MCF 10A (cell line): ENCODE measurements at regions of chr4 and their contacts with region 1.

Region 1: GRCh38 chr4:53377319-53378170 is at the start of gene FIP1L1:
- DNase-seq: peak; percentile 94
- H3K4me3 Mint-ChIP-seq: peak within 1 kb of the TSS; percentile 86
- H3K27ac Mint-ChIP-seq: peak within 1 kb of the TSS; percentile 94
- H3K4me1 Mint-ChIP-seq: peaks cover 17% of the 10 kb centered on the region
- H3K27me3 Mint-ChIP-seq: no peaks in the 10 kb centered on the region
- CTCF ChIP-seq: no peak
- total RNA-seq, gene FIP1L1: 93.3 and 103 TPM in 2 replicates

Region 2: GRCh38 chr4:53313510-53313909 is 64.0 kb before region 1 on chr4:
- CTCF ChIA-PET with region 1: no interaction called
- POLR2A ChIA-PET with region 1: no interaction called
- intact Hi-C with region 1: no loop called
- DNase-seq: peak; percentile 43
- H3K4me3 Mint-ChIP-seq: no peak overlapping the region
- H3K27ac Mint-ChIP-seq: no peak overlapping the region
- H3K4me1 Mint-ChIP-seq: peaks cover under 1% of the 10 kb centered on the region
- H3K27me3 Mint-ChIP-seq: no peaks in the 10 kb centered on the region
- CTCF ChIP-seq: no peak

Region 3: GRCh38 chr4:53365486-53366300 is 11.9 kb before region 1 on chr4 and contains the start of gene SCFD2:
- CTCF ChIA-PET with region 1: interaction called, 3 read pairs
- POLR2A ChIA-PET with region 1: interaction called, 75 read pairs
- intact Hi-C with region 1: no loop called
- DNase-seq: peak; percentile 98
- H3K4me3 Mint-ChIP-seq: peak within 1 kb of the TSS; percentile 92
- H3K27ac Mint-ChIP-seq: peak within 1 kb of the TSS; percentile 76
- H3K4me1 Mint-ChIP-seq: peaks cover 30% of the 10 kb centered on the region
- H3K27me3 Mint-ChIP-seq: peaks cover 31% of the 10 kb centered on the region
- CTCF ChIP-seq: no peak
- total RNA-seq, gene SCFD2: 16.8 and 19.2 TPM in 2 replicates